H1 (cell line): ENCODE measurements at regions of chr22 and their contacts with region 1.

Region 1: DNA sequence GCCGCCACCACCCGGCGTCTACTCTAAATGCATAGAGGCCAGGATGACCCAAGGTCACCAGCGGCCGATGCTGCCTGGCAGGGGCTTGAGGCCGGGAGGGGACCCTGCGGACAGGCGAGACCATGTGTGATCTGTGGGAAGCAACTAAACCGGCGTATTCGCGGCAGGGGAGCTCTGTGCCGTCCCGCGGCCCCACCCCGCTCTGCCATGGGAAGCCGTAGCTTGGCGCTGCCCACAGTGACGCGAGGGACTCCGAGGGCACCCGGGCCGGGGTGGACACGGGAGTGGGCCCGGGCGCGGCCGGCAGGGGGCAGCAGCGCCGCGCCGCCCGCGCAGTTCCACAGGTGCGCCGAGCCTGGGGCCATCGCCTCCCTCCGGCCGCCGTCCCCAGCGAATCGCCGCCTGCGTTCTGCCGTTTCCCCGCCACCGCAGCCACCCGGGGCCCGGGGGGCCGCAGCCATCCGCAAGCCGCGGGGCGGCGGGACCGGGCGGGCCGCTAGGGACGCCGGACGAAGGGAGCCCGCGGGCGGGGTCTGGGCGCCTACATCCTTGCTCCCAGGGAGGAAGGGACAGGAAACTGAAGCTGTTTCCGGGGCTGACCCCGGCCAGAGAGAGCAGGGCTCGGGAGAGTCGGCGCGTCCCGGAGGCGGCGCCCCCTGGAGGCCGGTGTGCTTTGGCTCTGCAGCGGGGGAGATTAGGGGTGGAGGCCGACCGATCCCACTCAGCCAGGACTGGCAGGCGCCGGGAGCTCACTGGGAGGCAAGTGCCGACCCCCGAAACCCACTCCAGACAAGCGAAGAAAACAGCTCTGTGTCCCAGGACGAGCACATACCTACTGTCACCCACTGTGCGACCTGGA is 12.5 kb upstream of the HDHD5 start:
- DNase-seq: peak; percentile 79 to 97
- H3K4me3 ChIP-seq: peak overlapping the region; percentile 39 to 69 (median 60)
- H3K27ac ChIP-seq: peak overlapping the region; percentile 41; the same call in 1 of the 2 replicates
- H3K4me1 ChIP-seq: peaks cover 0 to 11% (median 5%) of the 10 kb centered on the region in 4 experiments; a peak in 5 of 7 replicates
- H3K27me3 ChIP-seq: no peaks in the 10 kb centered on the region
- CTCF ChIP-seq: peak; percentile 81 to 92 (median 83)
- EP300 ChIP-seq: peak; percentile 2 to 29; a peak in 1 of 3 replicates
- POLR2A ChIP-seq: peak in 1 of 2 experiments; percentile 75; a peak in 2 of 3 replicates
- RAD21 ChIP-seq: peak; percentile 58 to 74

Region 2: DNA sequence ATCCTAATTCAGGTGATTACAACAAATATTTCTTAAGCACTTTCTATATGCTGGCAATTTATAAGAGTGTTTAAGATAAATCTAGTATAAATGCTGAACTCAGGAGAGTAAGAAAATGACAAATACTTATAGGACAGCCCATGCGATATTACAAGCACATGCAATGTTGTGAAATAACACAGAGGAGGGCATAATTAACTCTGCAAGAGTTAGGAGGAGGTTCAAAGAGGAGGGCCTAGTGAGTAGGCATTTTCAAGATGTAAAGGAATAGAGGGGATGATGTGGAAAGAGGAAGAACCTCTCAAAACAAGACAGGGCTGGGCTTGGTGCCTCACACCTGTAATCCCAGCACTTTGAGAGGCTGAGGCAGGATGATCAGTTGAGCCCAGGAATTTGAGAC is 123.9 kb before region 1 on chr22:
- CTCF ChIA-PET with region 1: no interaction called
- POLR2A ChIA-PET with region 1: no interaction called
- DNase-seq: no peak
- H3K4me3 ChIP-seq: no peak overlapping the region
- H3K27ac ChIP-seq: no peak overlapping the region
- H3K4me1 ChIP-seq: no peaks in the 10 kb centered on the region
- H3K27me3 ChIP-seq: no peaks in the 10 kb centered on the region; a peak in 3 of 7 replicates
- CTCF ChIP-seq: no peak
- EP300 ChIP-seq: no peak
- POLR2A ChIP-seq: no peak
- RAD21 ChIP-seq: no peak

Region 3: DNA sequence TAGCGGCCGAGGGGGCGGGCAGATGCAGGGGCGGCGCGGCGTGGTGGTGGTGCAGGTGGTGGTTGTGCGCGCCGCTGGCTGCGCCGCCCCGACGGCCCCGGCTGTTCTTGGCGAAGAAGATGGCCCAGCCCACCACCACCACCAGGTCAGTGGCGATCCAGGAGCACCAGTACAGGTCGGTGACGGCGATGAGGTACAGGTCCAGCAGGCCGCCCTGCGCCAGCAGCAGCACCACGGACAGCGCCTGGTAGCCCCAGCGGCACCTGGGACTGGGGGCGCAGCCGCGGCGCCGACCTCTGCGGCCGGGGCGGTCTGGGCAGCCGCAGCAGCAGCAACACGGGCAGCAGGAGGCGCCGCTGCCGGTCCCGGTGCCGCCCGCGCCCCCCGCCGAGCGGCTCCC is 51.3 kb before region 1 on chr22:
- CTCF ChIA-PET with region 1: interaction called, 19 read pairs
- POLR2A ChIA-PET with region 1: interaction called, 7 read pairs
- DNase-seq: peak; percentile 46 to 93
- H3K4me3 ChIP-seq: peak overlapping the region; percentile 15 to 64 (median 24); a peak in 6 of 8 replicates
- H3K27ac ChIP-seq: no peak overlapping the region
- H3K4me1 ChIP-seq: peaks cover 4 to 17% (median 12%) of the 10 kb centered on the region in 4 experiments
- H3K27me3 ChIP-seq: peaks cover 0 to 4% (median 3%) of the 10 kb centered on the region in 4 experiments; a peak in 4 of 7 replicates
- CTCF ChIP-seq: peak in 2 of 3 experiments; percentile 11 to 21; a peak in 2 of 4 replicates
- EP300 ChIP-seq: no peak
- POLR2A ChIP-seq: no peak
- RAD21 ChIP-seq: no peak; a peak in 1 of 4 replicates

Region 4: DNA sequence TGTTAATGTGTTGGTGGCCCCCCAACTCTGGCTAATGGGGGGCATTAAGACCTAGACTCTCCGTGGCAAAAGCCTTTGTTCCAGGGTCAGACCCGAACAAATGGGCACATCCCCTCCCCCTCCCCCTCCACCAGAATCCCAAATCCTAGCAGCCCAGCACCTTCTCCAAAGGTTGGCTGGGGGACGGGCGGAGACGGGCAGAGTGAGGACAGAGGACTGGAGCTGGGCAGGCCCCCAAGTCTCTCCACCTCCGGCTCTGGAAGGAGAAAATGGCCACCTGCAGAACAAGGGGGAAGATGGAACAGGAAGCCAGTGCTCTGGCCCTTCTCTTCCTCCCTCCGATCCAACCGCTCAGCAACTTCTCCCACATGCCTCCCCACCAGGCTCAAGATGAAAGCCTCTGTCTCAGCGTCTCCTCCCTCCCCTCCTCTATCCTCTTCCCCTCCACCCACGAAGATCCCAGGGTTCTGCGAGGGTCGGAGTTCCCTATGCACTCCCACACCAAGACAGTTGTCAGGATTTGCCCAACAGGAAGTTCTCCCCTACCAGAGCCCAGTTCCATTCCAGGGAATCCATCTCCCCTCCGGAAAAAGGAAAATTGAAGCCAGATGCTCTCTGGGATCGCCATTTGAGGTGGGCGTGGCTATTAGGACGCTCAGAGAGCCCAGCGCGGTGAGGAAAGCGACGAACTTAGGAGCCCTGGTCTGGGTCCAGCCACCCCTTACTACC is 27.6 kb after region 1 on chr22:
- CTCF ChIA-PET with region 1: interaction called, 94 read pairs
- POLR2A ChIA-PET with region 1: interaction called, 42 read pairs
- DNase-seq: peak; percentile 50 to 77
- H3K4me3 ChIP-seq: peak overlapping the region; percentile 47 to 65 (median 56); a peak in 7 of 8 replicates
- H3K27ac ChIP-seq: peak overlapping the region; percentile 99
- H3K4me1 ChIP-seq: peaks cover 16 to 31% (median 19%) of the 10 kb centered on the region in 4 experiments
- H3K27me3 ChIP-seq: no peaks in the 10 kb centered on the region
- CTCF ChIP-seq: no peak
- EP300 ChIP-seq: peak in 1 of 2 experiments; percentile 78; a peak in 1 of 3 replicates
- POLR2A ChIP-seq: peak; percentile 25 to 97
- RAD21 ChIP-seq: no peak

Region 5: GRCh38 chr22:17237038-17237668 is 65.6 kb after region 1 on chr22:
- CTCF ChIA-PET with region 1: interaction called, 51 read pairs
- POLR2A ChIA-PET with region 1: interaction called, 16 read pairs
- DNase-seq: no peak
- H3K4me3 ChIP-seq: no peak overlapping the region
- H3K27ac ChIP-seq: no peak overlapping the region
- H3K4me1 ChIP-seq: peaks cover 8 to 22% (median 15%) of the 10 kb centered on the region in 4 experiments
- H3K27me3 ChIP-seq: no peaks in the 10 kb centered on the region
- CTCF ChIP-seq: no peak
- EP300 ChIP-seq: no peak
- POLR2A ChIP-seq: no peak
- RAD21 ChIP-seq: no peak

Region 6: GRCh38 chr22:17266251-17266971 is 94.9 kb after region 1 on chr22:
- CTCF ChIA-PET with region 1: interaction called, 24 read pairs
- POLR2A ChIA-PET with region 1: interaction called, 6 read pairs
- DNase-seq: peak in 1 of 2 experiments; percentile 71
- H3K4me3 ChIP-seq: peak overlapping the region in 3 of 4 experiments; percentile 5 to 41 (median 10); a peak in 4 of 8 replicates
- H3K27ac ChIP-seq: peak overlapping the region; percentile 34
- H3K4me1 ChIP-seq: peaks cover 32 to 63% (median 45%) of the 10 kb centered on the region in 4 experiments
- H3K27me3 ChIP-seq: no peaks in the 10 kb centered on the region
- CTCF ChIP-seq: no peak
- EP300 ChIP-seq: no peak
- POLR2A ChIP-seq: no peak; a peak in 1 of 3 replicates
- RAD21 ChIP-seq: no peak